ENCODE measurements at regions of chr15 and their contacts with region 1.

Region 1: DNA sequence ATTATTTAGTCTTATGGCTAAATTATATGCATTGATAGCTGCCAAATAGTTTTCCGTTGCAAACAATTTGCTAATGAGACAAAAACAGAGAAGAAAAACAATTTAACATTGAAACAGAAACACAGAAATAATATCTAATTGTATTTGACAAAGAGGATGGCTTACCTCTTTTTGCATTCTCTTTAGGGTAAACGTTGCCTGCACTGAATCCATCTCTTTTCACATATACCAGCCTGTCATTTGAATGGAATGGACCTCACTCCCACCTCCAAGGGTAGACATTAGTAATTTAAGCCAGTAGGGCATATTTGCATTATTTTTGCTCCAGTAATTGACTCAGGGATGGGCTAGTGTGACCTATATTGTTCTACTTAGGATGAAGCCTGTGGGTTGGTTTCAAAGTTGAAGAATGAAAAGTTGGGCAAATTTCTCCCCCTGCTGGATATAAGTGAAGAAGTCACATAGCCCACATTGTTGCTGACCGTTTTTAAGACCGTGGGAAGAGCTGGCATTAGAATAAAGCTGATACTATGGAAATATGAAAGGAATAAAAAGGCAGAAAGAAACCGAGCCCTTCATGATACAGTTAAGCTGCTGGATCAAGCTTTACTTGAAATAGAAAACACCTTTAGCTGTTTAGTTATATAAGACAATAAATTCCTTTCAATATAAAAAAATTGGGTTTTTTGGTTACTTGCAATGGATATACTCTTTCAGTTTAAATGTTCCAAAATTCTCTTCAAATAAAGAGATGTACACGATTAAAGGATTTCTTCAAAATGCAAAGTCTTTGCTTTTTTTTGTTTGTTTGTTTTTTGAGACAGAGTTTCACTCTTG is 26.9 kb downstream of the PIERCE2 start:
- DNase-seq: no peak
- ATAC-seq: peak in 2 of 8 donors; percentile 55
- H3K4me3 ChIP-seq: no peak overlapping the region
- H3K27ac ChIP-seq: no peak overlapping the region
- H3K4me1 ChIP-seq: no peaks in the 10 kb centered on the region
- H3K27me3 ChIP-seq: no peaks in the 10 kb centered on the region
- CTCF ChIP-seq: peak in 8 of 9 donors; percentile 23 to 61 (median 49)

Region 2: DNA sequence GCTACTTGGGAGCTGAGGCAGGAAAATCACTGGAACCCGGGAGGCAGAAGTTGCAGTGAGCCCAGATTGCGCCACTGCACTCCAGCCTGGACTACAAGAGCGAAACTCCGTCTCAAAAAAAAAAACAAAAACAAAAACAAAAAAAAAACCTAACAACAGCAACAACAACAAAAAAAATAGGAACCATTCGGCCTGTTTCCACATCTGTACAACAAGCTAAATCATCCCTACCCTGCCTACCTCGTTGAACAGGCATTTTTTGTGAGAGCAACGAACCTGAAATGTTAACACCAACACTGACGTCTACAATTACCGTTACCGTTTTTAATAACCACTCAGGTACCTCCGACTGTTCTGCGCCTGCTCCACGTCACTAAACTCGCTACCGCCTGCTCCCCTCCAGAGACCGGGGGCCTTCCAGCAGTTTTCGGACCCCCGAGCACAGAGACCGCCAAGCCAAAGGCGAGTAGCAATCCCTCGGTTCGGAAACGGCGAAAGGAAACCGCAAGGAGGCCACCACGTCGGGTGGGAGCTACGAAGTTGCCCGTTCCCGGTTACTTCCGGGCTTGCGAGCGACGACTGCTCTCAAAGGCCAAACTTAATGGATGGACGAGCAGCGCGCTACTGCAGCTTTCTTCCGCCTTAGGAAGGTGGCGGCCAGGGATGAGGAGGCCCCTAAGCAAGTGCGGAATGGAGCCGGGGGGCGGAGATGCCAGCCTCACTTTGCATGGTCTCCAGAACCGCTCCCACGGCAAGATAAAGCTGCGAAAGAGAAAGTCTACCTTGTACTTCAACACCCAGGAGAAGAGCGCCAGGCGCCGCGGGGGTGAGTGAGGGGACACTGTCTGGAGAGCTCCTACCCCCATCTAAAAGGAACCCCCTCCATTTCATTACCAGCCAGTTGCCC is 116.4 kb before region 1 on chr15 and contains the starts of genes PIGB and PIGBOS1:
- intact Hi-C with region 1: loop called in 2 of 10 experiments (anchors 10 kb)
- DNase-seq: peak; percentile 80 to 88
- ATAC-seq: peak; percentile 97 to 99 (median 98)
- H3K4me3 ChIP-seq: peak within 1 kb of the TSS; percentile 60 to 92 (median 84)
- H3K27ac ChIP-seq: peak within 1 kb of the TSS; percentile 23 to 98 (median 88)
- H3K4me1 ChIP-seq: peaks cover 0 to 37% (median 29%) of the 10 kb centered on the region in 9 donors
- H3K27me3 ChIP-seq: no peaks in the 10 kb centered on the region
- CTCF ChIP-seq: peak in 2 of 9 donors; percentile 16 to 24
- total RNA-seq, gene PIGB: 1.4 to 4.3 (median 3.1) TPM
- total RNA-seq, gene PIGBOS1: 3.3 to 8.7 (median 7.4) TPM

Region 3: GRCh38 chr15:55372701-55373440 is 62.3 kb before region 1 on chr15:
- intact Hi-C with region 1: no loop called
- DNase-seq: no peak
- ATAC-seq: peak in 2 of 8 donors; percentile 53 to 64
- H3K4me3 ChIP-seq: peak overlapping the region in 2 of 10 donors; percentile 1 to 5
- H3K27ac ChIP-seq: peak overlapping the region in 9 of 10 donors; percentile 26 to 69 (median 56)
- H3K4me1 ChIP-seq: peaks cover 0 to 24% (median 7%) of the 10 kb centered on the region in 9 donors
- H3K27me3 ChIP-seq: no peaks in the 10 kb centered on the region
- CTCF ChIP-seq: no peak

Region 4: GRCh38 chr15:55484917-55485672 is 49.9 kb after region 1 on chr15:
- intact Hi-C with region 1: no loop called
- DNase-seq: no peak
- ATAC-seq: no peak
- H3K4me3 ChIP-seq: no peak overlapping the region
- H3K27ac ChIP-seq: no peak overlapping the region
- H3K4me1 ChIP-seq: no peaks in the 10 kb centered on the region
- H3K27me3 ChIP-seq: no peaks in the 10 kb centered on the region
- CTCF ChIP-seq: no peak

Region 5: GRCh38 chr15:55564347-55565145 is 129.3 kb after region 1 on chr15:
- intact Hi-C with region 1: no loop called
- DNase-seq: no peak
- ATAC-seq: no peak
- H3K4me3 ChIP-seq: no peak overlapping the region
- H3K27ac ChIP-seq: no peak overlapping the region
- H3K4me1 ChIP-seq: no peaks in the 10 kb centered on the region
- H3K27me3 ChIP-seq: no peaks in the 10 kb centered on the region
- CTCF ChIP-seq: no peak

Measured in heart right ventricle (tissue), 16 donors.